Left ventricle myocardium superior (tissue), 1 donor: ENCODE measurements at regions of chr1 and their contacts with region 1.

Region 1: GRCh38 chr1:145963995-145964901 is at the starts of genes ANKRD34A and POLR3GL:
- DNase-seq: peak; percentile 96
- ATAC-seq: peak; percentile 81
- total RNA-seq, gene ANKRD34A: 0.52 TPM
- total RNA-seq, gene POLR3GL: 44.0 TPM

Region 2: GRCh38 chr1:145918144-145918992 is 45.9 kb before region 1 on chr1 and contains the start of gene PEX11B:
- intact Hi-C with region 1: loop called (anchors 5 kb)
- DNase-seq: peak; percentile 91
- ATAC-seq: peak; percentile 94
- total RNA-seq, gene PEX11B: 23.8 TPM